RWPE1 (cell line): ENCODE measurements at regions of chr16 and their contacts with region 1.

Region 1: DNA sequence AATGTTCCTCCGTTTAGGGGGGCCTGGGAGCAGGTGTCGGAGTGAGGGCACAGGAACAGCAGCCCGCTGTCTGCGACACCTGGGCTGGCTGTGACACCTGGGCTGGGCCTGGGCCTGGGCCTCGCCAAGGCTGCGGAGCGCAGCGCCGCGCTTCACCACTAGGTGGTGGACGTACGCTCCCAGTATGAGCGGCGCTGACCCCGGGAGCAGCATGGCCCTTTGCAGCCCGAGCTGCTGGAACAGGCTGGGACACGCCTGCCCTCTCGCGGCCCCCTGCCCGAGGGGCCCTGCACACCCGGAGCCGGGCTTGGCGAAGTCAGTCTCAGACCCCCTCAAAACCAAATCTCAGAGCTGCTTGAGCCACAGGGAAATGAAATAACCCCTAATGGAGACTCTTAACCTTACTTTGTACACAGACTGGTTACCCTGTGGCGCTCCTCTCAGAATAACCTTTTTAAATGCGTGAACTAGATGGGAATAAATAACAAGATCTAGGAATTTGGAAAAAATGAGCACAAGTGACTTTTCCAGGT is 38.6 kb upstream of the FA2H start:
- DNase-seq: peak; percentile 76
- H3K27ac ChIP-seq: no peak overlapping the region
- CTCF ChIP-seq: peak; percentile 97

Region 2: DNA sequence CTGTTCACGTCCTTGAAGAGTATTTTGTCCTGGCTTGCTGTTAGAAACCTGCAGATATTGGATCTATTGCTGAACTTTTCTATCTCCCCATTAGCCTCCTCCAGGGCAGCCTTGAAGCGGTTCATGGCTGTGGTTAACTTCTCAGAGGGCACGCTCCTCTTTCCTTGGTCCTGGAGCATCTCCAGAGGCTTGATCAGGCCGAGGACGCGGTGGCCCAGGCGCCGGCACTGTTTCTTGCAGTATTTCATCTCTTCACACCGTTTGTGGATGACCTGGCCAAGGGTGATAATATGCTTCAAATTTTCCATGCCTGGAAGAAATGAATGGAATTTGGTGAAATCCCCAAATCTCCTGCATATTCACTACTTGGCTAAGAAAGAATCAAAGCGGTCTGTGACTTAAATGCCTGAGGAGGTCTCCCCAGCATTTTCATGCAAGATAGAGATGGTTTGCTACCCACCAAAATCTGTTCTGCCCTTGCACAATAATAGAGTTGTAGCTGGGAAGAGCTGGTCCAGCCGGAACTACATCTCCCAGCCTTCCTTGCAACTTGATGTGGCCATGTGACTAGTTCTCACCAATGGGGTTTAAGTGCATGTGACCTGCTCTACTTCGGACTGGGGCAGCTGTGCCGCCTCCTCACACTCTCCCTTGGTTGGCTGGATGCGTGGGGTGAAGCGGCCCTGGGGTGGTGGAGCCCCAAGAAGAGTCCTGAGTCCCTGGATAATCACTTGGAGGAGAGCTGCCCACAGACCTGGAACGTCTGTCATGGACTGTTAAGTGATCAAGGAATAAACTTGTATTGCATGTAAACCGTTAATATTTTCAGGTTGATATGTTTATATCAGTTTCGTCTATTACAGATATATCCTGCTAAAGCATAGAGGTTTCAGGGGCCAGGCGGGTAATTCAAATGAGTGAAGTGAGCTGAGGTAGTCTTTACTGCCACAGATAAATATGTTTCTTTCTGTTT is 117.4 kb before region 1 on chr16:
- CTCF ChIA-PET with region 1: interaction called, 10 read pairs
- POLR2A ChIA-PET with region 1: no interaction called
- DNase-seq: peak; percentile 91
- H3K27ac ChIP-seq: peak overlapping the region; percentile 53
- CTCF ChIP-seq: no peak